GM10248 (cell line): ENCODE measurements at regions of chr9 and their contacts with region 1.

Region 1: GRCh38 chr9:129131300-129132145 is 20.3 kb downstream of the PTPA start:
- DNase-seq: peak; percentile 88
- CTCF ChIP-seq: peak; percentile 87

Region 2: GRCh38 chr9:129110740-129111527 is 20.6 kb before region 1 on chr9 and contains the starts of genes CRAT and PTPA:
- CTCF ChIA-PET with region 1: interaction called, 38 read pairs
- POLR2A ChIA-PET with region 1: no interaction called
- DNase-seq: peak; percentile 100
- CTCF ChIP-seq: no peak

Region 3: DNA sequence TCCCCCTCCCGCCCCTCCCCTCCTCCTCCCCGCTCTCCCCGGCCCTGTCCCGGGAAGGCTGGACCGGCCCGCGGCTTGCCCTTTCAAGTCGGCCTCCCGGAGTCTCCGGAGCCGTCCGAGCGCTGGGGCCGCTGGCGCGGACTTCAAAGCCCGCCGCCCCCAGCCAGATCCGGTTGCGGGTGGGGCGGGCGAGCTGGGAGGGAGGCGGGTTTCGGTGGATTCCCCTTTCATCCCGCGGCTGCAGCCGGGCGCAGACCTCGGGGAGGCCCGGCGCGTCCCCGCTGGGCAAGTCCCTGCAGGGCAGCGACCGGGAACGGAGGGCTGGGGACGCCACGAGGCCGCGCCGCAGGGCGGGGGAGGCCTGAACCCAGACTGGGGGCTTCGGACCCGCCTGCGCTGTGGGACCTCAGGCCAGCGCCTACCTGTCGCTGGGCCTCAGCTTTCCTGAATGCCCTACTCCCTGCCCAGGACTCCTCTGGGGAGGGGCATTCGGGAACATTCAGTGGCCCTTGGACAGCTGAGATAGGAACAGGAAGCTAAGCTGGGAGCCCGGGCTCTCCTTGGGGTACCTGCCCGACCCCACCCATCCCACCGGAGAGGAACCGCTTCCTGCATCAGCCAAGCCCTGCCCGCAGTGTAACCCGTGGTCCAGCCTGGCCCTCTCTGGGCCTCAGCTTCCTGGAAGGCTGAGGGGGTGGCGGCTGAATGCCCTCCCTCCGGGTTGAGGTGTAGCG is 466.0 kb after region 1 on chr9:
- CTCF ChIA-PET with region 1: interaction called, 10 read pairs
- POLR2A ChIA-PET with region 1: no interaction called
- DNase-seq: peak; percentile 76
- CTCF ChIP-seq: no peak

Region 4: GRCh38 chr9:129610473-129611301 is 479.2 kb after region 1 on chr9:
- CTCF ChIA-PET with region 1: interaction called, 22 read pairs
- POLR2A ChIA-PET with region 1: no interaction called
- DNase-seq: peak; percentile 82
- CTCF ChIP-seq: peak; percentile 97